AG04449 (cell line): ENCODE measurements at regions of chr10 and their contacts with region 1.

Region 1: GRCh38 chr10:90871766-90872647 is at the start of gene RPP30:
- DNase-seq: no peak
- H3K4me3 ChIP-seq: peak within 1 kb of the TSS; percentile 90
- CTCF ChIP-seq: no peak

Region 2: DNA sequence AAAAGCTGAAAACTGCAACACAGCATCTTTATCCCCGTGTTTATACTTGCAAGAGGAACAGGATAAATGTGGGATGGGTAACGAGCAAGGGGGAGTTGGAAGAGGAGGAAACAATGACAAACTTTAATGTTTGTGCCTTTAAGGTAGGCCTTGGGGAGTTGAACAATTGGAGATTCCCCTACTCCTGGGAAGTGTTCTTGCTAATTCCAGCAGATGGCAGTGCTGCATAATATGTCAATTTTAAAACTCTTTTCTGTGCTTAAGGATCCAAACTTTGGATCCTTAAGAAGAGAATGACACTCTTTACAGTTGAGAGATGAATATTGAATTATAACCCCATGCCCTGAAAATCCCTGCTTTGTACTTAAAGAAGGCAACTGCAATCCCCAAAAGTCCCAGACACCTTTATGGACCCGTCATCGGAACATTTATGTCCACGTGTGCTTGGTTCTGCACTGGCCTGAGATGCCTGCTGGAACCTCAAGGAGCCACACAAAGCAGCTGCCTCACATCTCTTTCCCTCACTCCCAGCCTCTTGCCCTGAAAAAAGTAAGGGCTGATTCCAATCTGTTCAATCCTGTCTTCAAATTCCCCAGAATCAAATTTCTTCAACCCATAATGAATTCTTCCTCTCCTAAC is 1445.7 kb before region 1 on chr10:
- CTCF ChIA-PET with region 1: no interaction called
- POLR2A ChIA-PET with region 1: no interaction called
- DNase-seq: no peak
- H3K4me3 ChIP-seq: no peak overlapping the region
- CTCF ChIP-seq: peak; percentile 49

Region 3: GRCh38 chr10:90751107-90751997 is 120.7 kb before region 1 on chr10:
- CTCF ChIA-PET with region 1: interaction called, 532 read pairs
- POLR2A ChIA-PET with region 1: no interaction called
- DNase-seq: no peak
- H3K4me3 ChIP-seq: no peak overlapping the region
- CTCF ChIP-seq: peak; percentile 63

Region 4: GRCh38 chr10:90798482-90798881 is 73.5 kb before region 1 on chr10:
- CTCF ChIA-PET with region 1: no interaction called
- POLR2A ChIA-PET with region 1: no interaction called
- DNase-seq: no peak
- H3K4me3 ChIP-seq: no peak overlapping the region
- CTCF ChIP-seq: no peak

Region 5: GRCh38 chr10:90857635-90858460 is 14.2 kb before region 1 on chr10 and contains the start of gene HTR7:
- CTCF ChIA-PET with region 1: interaction called, 43 read pairs
- POLR2A ChIA-PET with region 1: interaction called, 3 read pairs
- DNase-seq: no peak
- H3K4me3 ChIP-seq: peak within 1 kb of the TSS; percentile 63
- CTCF ChIP-seq: peak; percentile 57

Region 6: GRCh38 chr10:91632671-91633550 is 760.9 kb after region 1 on chr10 and contains the start of gene PPP1R3C:
- CTCF ChIA-PET with region 1: no interaction called
- POLR2A ChIA-PET with region 1: no interaction called
- DNase-seq: peak; percentile 80
- H3K4me3 ChIP-seq: peak within 1 kb of the TSS; percentile 79
- CTCF ChIP-seq: peak; percentile 68